Body of pancreas (tissue), 4 donors: ENCODE measurements at regions of chr15 and their contacts with region 1.

Region 1: DNA sequence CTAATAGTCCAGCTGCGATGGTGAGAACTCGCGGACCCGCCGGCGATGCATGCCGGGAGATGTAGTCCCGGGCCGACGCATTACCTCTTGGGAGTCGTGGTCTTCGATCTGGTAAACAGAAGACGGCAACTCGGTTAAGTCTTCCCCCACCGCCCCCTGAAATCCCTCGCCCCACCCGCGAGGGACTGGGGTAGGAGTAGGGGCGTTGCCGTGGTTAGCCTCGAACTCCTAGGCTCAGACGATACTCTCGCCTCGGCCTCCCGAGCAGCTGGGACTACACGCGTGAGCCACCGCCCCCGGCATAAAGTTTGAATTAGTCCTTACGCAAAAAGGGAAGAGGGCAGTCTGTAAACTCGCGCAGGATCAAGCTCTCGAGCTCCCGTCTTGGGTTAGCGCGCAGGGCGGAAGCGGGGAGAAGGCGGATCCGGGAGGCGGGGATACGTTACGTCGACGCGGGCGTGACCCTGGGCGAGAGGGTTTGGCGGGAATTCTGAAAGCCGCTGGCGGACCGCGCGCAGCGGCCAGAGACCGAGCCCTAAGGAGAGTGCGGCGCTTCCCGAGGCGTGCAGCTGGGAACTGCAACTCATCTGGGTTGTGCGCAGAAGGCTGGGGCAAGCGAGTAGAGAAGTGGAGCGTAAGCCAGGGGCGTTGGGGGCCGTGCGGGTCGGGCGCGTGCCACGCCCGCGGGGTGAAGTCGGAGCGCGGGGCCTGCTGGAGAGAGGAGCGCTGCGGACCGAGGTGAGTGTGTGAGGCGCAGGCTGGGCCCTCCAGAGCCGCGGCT is at the start of gene RAD51:
- DNase-seq: peak; percentile 89 to 93 (median 91)
- ATAC-seq: peak; percentile 95
- H3K4me3 ChIP-seq: peak within 1 kb of the TSS; percentile 44 to 59
- H3K27ac ChIP-seq: peak within 1 kb of the TSS; percentile 94 to 100 (median 98)
- H3K4me1 ChIP-seq: peaks cover 18% of the 10 kb centered on the region
- H3K27me3 ChIP-seq: no peaks in the 10 kb centered on the region
- CTCF ChIP-seq: peak in 1 of 7 experiments; percentile 3
- POLR2A ChIP-seq: peak; percentile 44 to 85 (median 82)
- total RNA-seq, gene RAD51: 2.3 TPM in 1 of 2 donors, not detected in the other

Region 2: DNA sequence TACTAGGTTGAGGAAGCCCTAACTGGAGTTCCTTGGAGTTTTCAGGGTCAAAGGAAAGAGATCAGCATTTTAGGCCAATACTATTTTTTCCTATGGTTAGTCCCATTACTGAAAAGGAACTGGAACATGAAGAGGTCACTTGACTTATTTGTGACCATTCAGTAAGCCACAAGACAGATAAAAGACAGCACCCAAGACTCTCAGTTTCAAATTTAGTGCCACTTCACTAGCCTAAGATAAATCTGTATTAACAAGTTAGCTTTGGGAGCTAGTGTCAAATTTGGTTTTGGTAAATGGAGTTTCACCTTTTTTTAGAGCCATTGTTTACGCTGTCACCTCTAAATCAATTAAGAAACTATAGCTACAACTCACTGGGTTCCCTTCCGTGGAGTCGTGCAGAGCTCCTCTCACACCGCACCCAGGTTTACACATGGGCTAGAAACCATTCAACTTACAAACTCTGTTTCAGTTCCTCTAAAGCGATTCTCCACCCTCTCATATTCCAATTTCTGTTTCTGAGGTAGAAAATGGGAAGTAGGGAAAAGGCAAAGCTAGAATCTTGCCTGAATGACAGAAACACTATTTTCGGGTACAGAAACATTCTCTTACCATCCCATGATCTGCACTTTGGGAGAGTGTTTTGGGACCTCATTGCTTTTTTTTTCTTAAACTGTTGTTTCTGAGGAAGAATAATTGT is 144.4 kb before region 1 on chr15:
- intact Hi-C with region 1: no loop called
- DNase-seq: no peak
- ATAC-seq: no peak
- H3K4me3 ChIP-seq: no peak overlapping the region
- H3K27ac ChIP-seq: no peak overlapping the region
- H3K4me1 ChIP-seq: peaks cover 12% of the 10 kb centered on the region
- H3K27me3 ChIP-seq: no peaks in the 10 kb centered on the region
- CTCF ChIP-seq: no peak
- POLR2A ChIP-seq: no peak

Region 3: GRCh38 chr15:40769274-40770146 is 74.6 kb after region 1 on chr15 and contains the start of gene C15orf62:
- intact Hi-C with region 1: loop called (anchors 10 kb)
- DNase-seq: peak in 3 of 4 donors; percentile 32 to 55 (median 55)
- ATAC-seq: peak; percentile 30
- H3K4me3 ChIP-seq: no peak within 1 kb of the TSS
- H3K27ac ChIP-seq: peak within 1 kb of the TSS; percentile 13 to 46 (median 32)
- H3K4me1 ChIP-seq: peaks cover 14% of the 10 kb centered on the region
- H3K27me3 ChIP-seq: no peaks in the 10 kb centered on the region
- CTCF ChIP-seq: no peak
- POLR2A ChIP-seq: no peak
- total RNA-seq, gene C15orf62: 0.26 TPM in 1 of 2 donors, not detected in the other